H1 (cell line): ENCODE measurements at regions of chr12 and their contacts with region 1.

Region 1: DNA sequence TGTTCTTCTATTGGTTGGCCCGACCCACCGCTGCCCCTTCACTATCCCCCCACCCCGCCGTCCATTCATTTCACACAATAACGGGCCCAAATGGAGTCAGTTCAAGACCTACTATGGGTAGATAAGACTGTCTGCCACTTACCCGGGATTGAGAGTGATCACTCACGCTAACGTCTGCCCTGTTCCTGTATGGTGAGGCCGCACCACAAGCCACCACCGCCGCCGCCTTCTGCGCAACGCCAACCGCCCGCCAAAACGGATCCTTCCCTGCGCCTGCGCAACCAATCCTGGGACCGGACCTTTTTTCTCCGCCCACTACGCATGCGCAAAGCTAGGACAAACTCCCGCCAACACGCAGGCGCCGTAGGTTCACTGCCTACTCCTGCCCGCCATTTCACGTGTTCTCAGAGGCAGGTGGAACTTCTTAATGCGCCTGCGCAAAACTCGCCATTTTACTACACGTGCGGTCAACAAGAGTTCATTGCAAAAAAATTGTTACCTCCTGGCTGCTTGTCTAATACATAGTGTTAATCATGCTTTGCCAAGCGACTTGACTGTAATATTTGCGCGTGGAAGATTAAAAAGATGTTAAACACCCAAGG is at the start of gene CBX5:
- DNase-seq: peak; percentile 96 to 98
- H3K4me3 ChIP-seq: peak within 1 kb of the TSS; percentile 83 to 99 (median 96)
- H3K27ac ChIP-seq: peak within 1 kb of the TSS; percentile 99
- H3K4me1 ChIP-seq: peaks cover 0 to 12% (median 8%) of the 10 kb centered on the region in 4 experiments; a peak in 5 of 7 replicates
- H3K27me3 ChIP-seq: no peaks in the 10 kb centered on the region
- CTCF ChIP-seq: no peak
- EP300 ChIP-seq: 0 out of 3 replicates have a peak, but pooled peaks of 1 of the 2 experiments have one; percentile 26
- POLR2A ChIP-seq: peak; percentile 50 to 67; a peak in 2 of 3 replicates
- RAD21 ChIP-seq: no peak; a peak in 1 of 4 replicates
- total RNA-seq, gene CBX5: 217 and 231 TPM in 2 replicates

Region 2: GRCh38 chr12:54240971-54241588 is 38.9 kb before region 1 on chr12:
- CTCF ChIA-PET with region 1: interaction called, 3 read pairs
- POLR2A ChIA-PET with region 1: interaction called, 1,006 read pairs
- DNase-seq: no peak
- H3K4me3 ChIP-seq: no peak overlapping the region
- H3K27ac ChIP-seq: no peak overlapping the region
- H3K4me1 ChIP-seq: no peaks in the 10 kb centered on the region
- H3K27me3 ChIP-seq: no peaks in the 10 kb centered on the region
- CTCF ChIP-seq: no peak
- EP300 ChIP-seq: no peak
- POLR2A ChIP-seq: no peak
- RAD21 ChIP-seq: no peak

Region 3: GRCh38 chr12:54294152-54294952 is 14.4 kb after region 1 on chr12:
- CTCF ChIA-PET with region 1: interaction called, 17 read pairs
- POLR2A ChIA-PET with region 1: interaction called, 1,006 read pairs
- DNase-seq: peak in 1 of 2 experiments; percentile 94
- H3K4me3 ChIP-seq: no peak overlapping the region
- H3K27ac ChIP-seq: no peak overlapping the region
- H3K4me1 ChIP-seq: peaks cover 0 to 2% (median 0%) of the 10 kb centered on the region in 4 experiments; a peak in 1 of 7 replicates
- H3K27me3 ChIP-seq: peaks cover 0 to 4% (median 0%) of the 10 kb centered on the region in 4 experiments; a peak in 1 of 7 replicates
- CTCF ChIP-seq: peak; percentile 91 to 95 (median 93)
- EP300 ChIP-seq: no peak
- POLR2A ChIP-seq: no peak
- RAD21 ChIP-seq: peak; percentile 81 to 92

Region 4: DNA sequence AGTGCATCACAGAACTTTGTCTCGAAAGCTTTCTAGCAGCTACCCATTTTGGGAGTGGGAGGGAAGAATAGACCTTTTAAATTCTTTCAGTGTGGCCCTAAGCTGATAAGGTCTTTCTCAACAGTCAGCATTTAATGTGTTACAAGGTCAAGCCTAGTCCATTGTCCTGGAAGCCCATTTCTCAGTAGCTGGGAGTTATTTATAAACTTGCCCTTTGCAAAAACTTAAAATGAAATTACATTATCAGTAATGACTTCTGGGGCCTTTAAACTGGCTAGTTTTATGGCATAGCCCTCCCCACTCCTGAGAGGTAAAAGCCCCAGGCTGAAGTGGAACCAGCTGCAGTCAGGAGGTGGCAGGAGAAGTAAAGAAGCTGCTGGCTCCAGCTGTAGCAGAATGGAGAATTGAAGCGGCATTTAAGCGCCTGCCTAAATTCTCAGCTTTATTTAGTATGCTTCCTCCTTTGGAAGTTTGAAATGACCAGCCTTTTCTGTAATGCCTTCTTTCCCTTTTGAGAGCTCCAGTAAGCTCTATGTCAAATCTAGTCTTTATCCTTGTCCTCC is 57.4 kb after region 1 on chr12:
- CTCF ChIA-PET with region 1: interaction called, 4 read pairs
- POLR2A ChIA-PET with region 1: interaction called, 166 read pairs
- DNase-seq: no peak
- H3K4me3 ChIP-seq: no peak overlapping the region
- H3K27ac ChIP-seq: no peak overlapping the region
- H3K4me1 ChIP-seq: no peaks in the 10 kb centered on the region
- H3K27me3 ChIP-seq: no peaks in the 10 kb centered on the region
- CTCF ChIP-seq: no peak
- EP300 ChIP-seq: no peak
- POLR2A ChIP-seq: no peak
- RAD21 ChIP-seq: peak in 1 of 2 experiments; percentile 26; a peak in 1 of 4 replicates

Region 5: GRCh38 chr12:54368709-54369583 is 89.0 kb after region 1 on chr12:
- CTCF ChIA-PET with region 1: interaction called, 5 read pairs
- POLR2A ChIA-PET with region 1: interaction called, 133 read pairs
- DNase-seq: peak in 1 of 2 experiments; percentile 90
- H3K4me3 ChIP-seq: peak overlapping the region; percentile 4 to 64 (median 17); a peak in 5 of 8 replicates
- H3K27ac ChIP-seq: no peak overlapping the region
- H3K4me1 ChIP-seq: peaks cover 0 to 11% (median 6%) of the 10 kb centered on the region in 4 experiments; a peak in 5 of 7 replicates
- H3K27me3 ChIP-seq: peaks cover 0 to 16% (median 12%) of the 10 kb centered on the region in 4 experiments; a peak in 6 of 7 replicates
- CTCF ChIP-seq: peak; percentile 90 to 94 (median 94)
- EP300 ChIP-seq: no peak
- POLR2A ChIP-seq: no peak
- RAD21 ChIP-seq: peak; percentile 84 to 88

Region 6: DNA sequence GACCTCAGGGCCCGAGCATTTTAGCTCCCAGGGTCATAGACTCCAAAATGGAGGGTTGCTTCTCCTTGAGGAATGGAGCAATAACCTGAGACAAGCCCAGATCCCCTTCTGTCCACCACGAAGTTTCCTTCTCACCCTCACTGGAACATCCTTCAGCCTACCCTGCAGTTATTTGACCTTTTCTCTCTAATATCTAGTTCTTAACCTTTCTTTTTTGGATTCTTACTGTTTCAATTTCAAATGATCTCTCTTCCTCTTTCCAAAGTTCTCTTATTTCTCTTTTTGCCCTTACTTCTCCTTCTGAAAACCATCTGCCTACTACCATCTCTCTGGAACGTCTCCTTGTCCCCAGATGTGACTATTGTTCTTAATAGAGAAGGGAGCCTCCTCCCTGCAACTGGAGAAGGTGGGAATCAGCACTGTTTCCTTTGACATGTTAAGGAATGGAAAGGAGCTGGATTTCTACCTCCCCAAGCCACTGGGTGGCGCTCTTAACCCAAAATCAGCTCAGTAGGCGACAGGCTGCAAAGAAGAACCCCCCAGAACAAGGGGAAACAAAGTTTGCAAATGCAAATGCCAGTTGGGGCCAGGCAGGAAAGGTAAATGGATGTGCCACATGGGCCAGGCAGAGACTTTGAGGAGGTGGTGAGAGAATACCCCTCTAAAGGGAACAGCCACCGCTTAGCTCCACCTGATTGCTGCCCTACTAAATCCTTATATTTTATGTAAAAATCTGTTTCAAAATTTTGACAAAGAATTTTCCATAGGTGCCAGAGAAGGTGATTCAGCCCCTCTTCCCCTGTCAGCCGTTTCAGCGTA is 247.1 kb after region 1 on chr12:
- CTCF ChIA-PET with region 1: no interaction called
- POLR2A ChIA-PET with region 1: no interaction called
- DNase-seq: peak; percentile 78 to 93
- H3K4me3 ChIP-seq: no peak overlapping the region
- H3K27ac ChIP-seq: no peak overlapping the region
- H3K4me1 ChIP-seq: peaks cover 0 to 16% (median 5%) of the 10 kb centered on the region in 4 experiments; a peak in 4 of 7 replicates
- H3K27me3 ChIP-seq: peaks cover 0 to 2% (median 2%) of the 10 kb centered on the region in 4 experiments; a peak in 4 of 7 replicates
- CTCF ChIP-seq: peak; percentile 61 to 95 (median 94)
- EP300 ChIP-seq: no peak
- POLR2A ChIP-seq: no peak
- RAD21 ChIP-seq: peak; percentile 98 to 99